Esophagus muscularis mucosa (tissue), 4 donors: ENCODE measurements at regions of chr13 and their contacts with region 1.

Region 1: DNA sequence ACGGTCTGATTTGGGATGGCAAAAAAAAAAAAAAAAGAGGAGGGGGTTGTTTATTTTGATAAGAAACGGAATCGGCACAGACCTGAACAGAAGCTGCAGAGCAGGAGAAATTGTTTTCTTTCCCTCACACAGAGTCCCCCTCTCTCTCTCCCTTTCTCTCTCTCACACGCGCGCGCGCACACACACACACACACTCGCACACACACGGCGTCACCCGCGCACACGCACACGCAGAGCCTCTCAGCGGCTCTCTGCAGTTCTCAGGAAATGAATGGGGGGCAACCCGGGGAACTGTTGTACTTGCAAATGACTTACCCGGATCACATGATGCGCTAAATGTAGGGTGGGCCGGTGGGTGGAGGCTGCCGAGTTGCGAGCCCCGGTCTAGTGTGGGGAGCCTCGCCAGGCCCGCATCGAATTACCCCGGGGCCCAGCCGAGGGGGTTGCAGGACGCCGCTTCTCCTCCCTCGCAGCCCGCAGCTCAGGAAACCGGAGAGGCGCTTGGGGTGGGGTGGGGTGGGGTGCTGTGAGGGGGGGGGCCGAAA is 475 bp downstream of the KLF12 start:
- DNase-seq: peak; percentile 96
- H3K4me3 ChIP-seq: peak overlapping the region; percentile 80 to 96 (median 90)
- H3K27ac ChIP-seq: peak overlapping the region; percentile 93 to 98 (median 96)
- H3K4me1 ChIP-seq: peaks cover 29 to 42% (median 42%) of the 10 kb centered on the region in 4 donors
- H3K27me3 ChIP-seq: no peaks in the 10 kb centered on the region
- CTCF ChIP-seq: no peak
- EP300 ChIP-seq: no peak
- POLR2A ChIP-seq: no peak

Region 2: DNA sequence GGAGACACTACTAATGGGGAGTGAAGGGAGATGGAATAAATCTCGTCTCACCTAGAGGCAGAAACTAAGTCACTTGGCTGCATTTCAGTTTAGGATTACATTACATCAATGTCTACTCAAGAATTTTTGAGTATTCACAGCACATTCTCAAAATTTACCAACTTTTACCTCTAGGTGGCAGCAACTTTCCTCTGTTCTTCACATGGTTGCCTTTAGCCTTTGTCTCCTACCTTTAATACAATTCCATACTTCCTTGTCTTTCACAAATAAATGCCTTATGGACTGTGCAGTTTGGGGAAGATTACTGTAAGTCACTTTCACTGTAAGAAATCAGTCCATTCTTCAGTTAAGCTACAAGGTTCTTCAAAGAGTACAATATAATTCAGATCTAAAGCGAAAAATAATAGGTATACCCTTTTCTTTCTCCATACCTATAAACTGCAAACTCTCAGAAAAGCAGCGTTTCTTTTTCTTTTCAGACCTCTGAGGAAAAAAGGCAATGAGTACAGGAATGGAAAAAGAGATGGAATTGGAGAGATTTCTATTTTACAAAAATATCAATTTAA is 378.9 kb before region 1 on chr13:
- intact Hi-C with region 1: loop called (anchors 5 kb)
- DNase-seq: no peak
- H3K4me3 ChIP-seq: no peak overlapping the region
- H3K27ac ChIP-seq: no peak overlapping the region
- H3K4me1 ChIP-seq: peaks cover 0 to 56% (median 42%) of the 10 kb centered on the region in 4 donors
- H3K27me3 ChIP-seq: no peaks in the 10 kb centered on the region
- CTCF ChIP-seq: peak; percentile 54 to 69 (median 64)
- EP300 ChIP-seq: no peak
- POLR2A ChIP-seq: no peak

Region 3: DNA sequence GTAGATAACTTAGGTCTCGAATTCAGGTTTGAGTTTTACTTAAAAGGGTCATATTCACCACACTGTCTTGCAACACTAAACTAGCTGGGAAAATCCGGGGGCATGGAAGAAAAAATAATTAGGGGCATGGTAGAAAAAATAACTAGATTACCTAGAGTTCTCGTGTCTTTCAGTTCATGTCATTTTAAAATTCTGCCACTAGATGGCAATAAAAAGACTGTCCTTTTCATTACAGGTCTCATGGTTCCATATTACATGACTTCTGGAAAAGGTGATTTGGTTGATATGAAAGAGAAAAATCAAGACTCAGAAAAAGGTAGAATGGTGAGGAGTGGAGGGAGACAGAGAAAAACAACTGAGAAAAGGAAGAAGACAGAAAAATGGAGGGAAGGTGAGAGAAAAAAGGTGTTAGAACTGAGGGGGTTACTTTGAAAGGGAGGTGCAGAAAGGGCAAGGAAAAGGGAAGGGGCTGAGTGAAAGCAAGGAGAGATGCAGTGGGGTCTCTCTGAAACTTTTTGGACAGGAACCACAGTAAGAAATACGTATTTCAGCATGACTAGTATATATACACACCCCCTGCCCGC is 298.5 kb before region 1 on chr13:
- intact Hi-C with region 1: loop called (anchors 5 kb)
- DNase-seq: no peak
- H3K4me3 ChIP-seq: no peak overlapping the region
- H3K27ac ChIP-seq: no peak overlapping the region
- H3K4me1 ChIP-seq: peaks cover 0 to 25% (median 12%) of the 10 kb centered on the region in 4 donors
- H3K27me3 ChIP-seq: no peaks in the 10 kb centered on the region
- CTCF ChIP-seq: peak; percentile 64 to 73 (median 68)
- EP300 ChIP-seq: no peak
- POLR2A ChIP-seq: no peak

Region 4: DNA sequence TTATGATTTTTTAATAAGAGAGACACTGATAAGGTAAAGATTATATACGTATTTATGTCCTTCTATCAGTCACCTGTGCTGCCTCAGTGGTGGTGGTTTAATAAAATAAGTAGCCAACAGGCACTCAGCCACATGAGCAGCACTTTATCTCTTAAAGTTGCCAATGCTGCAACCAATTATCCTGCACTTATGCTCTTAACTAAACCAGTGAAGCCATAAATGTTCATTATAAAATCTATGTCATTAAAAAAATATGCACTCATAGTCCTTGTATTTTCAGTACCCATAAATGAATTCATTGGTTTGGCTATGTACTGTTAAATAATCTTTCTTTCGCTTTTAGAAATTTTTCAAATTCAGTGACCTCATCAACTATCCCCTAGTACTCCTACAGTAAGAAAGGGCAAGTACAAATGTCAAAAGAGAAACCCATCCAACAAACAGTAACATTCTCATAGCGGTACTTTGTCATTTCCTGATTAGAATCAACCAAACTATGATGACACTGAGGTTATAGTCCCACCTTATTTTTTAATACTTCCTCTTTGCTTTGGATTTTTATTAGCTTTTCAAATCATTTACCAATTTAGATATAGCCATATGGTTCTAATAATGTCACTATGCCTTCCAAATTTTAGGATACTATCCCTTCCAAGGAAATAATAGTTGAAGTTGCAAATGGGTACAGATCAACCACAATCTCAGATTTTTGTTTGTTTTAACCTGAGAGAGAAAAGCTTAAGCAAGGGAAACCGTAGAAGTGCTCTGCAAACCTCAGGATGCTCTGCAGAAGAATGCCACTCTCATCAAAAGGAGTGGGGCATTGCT is 190.4 kb before region 1 on chr13:
- intact Hi-C with region 1: loop called (anchors 10 kb)
- DNase-seq: no peak
- H3K4me3 ChIP-seq: no peak overlapping the region
- H3K27ac ChIP-seq: peak overlapping the region; percentile 37 to 75 (median 57)
- H3K4me1 ChIP-seq: peaks cover 13 to 65% (median 53%) of the 10 kb centered on the region in 4 donors
- H3K27me3 ChIP-seq: no peaks in the 10 kb centered on the region
- CTCF ChIP-seq: no peak
- EP300 ChIP-seq: no peak
- POLR2A ChIP-seq: no peak

Region 5: GRCh38 chr13:74287724-74288169 is 154.0 kb after region 1 on chr13:
- intact Hi-C with region 1: loop called (anchors 5 kb)
- DNase-seq: no peak
- H3K4me3 ChIP-seq: peak overlapping the region in 2 of 4 donors; percentile 22 to 36
- H3K27ac ChIP-seq: peak overlapping the region in 2 of 4 donors; percentile 8 to 32
- H3K4me1 ChIP-seq: peaks cover 19 to 47% (median 42%) of the 10 kb centered on the region in 4 donors
- H3K27me3 ChIP-seq: no peaks in the 10 kb centered on the region
- CTCF ChIP-seq: no peak
- EP300 ChIP-seq: no peak
- POLR2A ChIP-seq: no peak